PC-3 (cell line): ENCODE measurements at regions of chr5 and their contacts with region 1.

Region 1: DNA sequence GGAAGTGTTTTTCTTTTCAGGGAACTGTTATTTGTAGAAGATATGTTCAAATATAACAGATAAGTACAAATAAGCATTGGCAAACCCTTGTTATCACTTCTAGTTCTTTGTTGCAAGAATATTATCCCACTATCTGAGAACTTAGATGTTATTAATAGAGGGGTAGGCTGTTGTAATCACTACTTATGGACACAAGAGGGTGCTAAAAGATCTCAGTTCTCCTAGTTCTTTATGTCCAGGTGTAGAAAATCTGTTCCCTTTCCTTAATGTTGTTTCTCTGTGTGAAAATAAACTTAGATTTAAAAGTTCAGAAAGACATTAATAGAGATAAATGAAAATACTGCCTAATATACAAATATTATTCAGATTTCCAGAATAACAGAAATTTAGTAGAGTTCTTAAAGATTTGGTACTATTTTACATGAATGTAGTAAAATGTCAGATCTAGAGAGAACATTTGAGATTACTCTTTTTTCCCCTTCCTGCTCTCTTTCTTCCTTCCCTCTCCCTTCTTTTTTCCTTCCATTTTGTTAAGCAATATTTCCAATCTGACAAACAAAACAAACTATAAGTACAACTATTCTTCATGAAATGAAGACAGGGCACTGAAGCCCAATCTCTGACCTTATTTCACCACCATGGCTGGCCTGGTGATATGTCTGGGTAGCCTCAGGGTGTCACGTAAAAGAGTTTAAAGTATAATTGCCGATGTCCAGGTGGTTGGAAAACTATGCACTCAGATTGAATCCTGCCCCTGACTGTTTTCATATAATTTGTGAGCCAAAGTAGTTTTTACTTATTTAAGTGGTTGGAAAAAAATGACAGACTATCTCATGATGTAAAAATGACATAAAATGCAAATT is 43.6 kb upstream of the C5orf46 start:
- DNase-seq: peak; percentile 85
- ATAC-seq: peak; percentile 93
- H3K4me3 ChIP-seq: no peak overlapping the region
- H3K27ac ChIP-seq: no peak overlapping the region
- H3K4me1 ChIP-seq: no peaks in the 10 kb centered on the region
- H3K27me3 ChIP-seq: no peaks in the 10 kb centered on the region
- CTCF ChIP-seq: peak; percentile 96

Region 2: GRCh38 chr5:147522435-147522834 is 427.5 kb before region 1 on chr5:
- CTCF ChIA-PET with region 1: no interaction called
- POLR2A ChIA-PET with region 1: no interaction called
- intact Hi-C with region 1: no loop called
- DNase-seq: peak; percentile 53
- ATAC-seq: peak; percentile 66
- H3K4me3 ChIP-seq: no peak overlapping the region
- H3K27ac ChIP-seq: peak overlapping the region; percentile 18; the same call in 1 of the 2 replicates
- H3K4me1 ChIP-seq: peaks cover 4% of the 10 kb centered on the region; the same call in 1 of the 2 replicates
- H3K27me3 ChIP-seq: no peaks in the 10 kb centered on the region
- CTCF ChIP-seq: no peak

Region 3: DNA sequence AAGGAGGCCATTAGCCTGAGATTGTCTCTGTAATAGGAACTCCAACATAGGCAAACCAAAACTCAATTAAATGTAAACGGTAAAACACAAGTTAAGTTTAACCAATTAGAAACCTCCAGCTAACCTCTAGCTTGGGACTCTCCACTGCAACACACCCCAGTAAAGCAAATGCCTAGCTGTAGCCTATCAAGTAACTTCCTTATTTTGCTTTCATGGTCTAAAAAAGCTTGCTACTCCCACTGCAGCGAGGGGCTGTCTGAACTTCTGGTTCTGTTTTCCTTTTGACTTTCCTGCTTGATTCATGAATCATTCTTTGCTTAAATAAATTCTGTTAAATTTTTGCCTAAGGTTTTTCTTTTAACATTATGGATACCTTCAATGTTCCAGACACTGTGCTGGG is 19.2 kb before region 1 on chr5:
- CTCF ChIA-PET with region 1: no interaction called
- POLR2A ChIA-PET with region 1: no interaction called
- intact Hi-C with region 1: no loop called
- DNase-seq: no peak
- ATAC-seq: no peak
- H3K4me3 ChIP-seq: no peak overlapping the region
- H3K27ac ChIP-seq: no peak overlapping the region
- H3K4me1 ChIP-seq: peaks cover 13% of the 10 kb centered on the region
- H3K27me3 ChIP-seq: no peaks in the 10 kb centered on the region
- CTCF ChIP-seq: no peak

Region 4: DNA sequence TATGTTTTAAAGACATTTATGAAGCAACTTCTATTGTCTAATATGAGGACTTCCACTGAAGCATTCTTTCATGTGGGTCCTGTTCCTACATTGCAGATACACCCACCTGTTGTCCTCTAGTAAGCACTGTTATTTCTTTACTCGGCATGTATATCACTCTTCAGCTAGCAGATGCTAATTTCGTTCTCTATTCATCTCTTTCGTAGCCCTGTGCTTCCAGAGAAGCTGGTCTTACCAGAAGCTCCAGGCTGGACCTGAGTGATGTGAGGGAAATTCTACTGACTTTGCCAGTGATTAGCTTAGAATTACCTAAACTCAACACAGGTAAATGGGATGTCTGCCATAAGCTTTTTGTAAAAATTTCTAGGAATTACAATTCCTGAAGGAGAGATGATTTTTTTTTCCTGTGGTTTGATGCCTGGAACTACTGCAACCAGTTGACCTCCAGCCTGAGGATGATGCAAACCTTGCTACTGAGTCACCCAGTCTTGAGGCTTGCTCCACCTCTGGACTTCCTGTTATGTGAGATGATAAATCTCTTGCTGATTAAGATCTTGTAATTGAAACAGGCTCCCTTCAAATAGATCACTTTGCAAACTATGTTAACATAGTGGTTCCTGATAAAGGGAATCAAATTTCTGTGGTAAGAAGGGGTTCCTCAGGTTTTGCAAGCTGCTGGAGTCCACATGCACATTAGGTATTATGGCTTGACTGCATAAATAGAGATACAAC is 61.6 kb after region 1 on chr5:
- CTCF ChIA-PET with region 1: no interaction called
- POLR2A ChIA-PET with region 1: no interaction called
- intact Hi-C with region 1: loop called (anchors 2 kb)
- DNase-seq: peak; percentile 98
- ATAC-seq: peak; percentile 94
- H3K4me3 ChIP-seq: peak overlapping the region; percentile 14; the same call in 1 of the 2 replicates
- H3K27ac ChIP-seq: peak overlapping the region; percentile 73
- H3K4me1 ChIP-seq: peaks cover 41% of the 10 kb centered on the region
- H3K27me3 ChIP-seq: no peaks in the 10 kb centered on the region
- CTCF ChIP-seq: no peak

Region 5: GRCh38 chr5:148125641-148126040 is 175.7 kb after region 1 on chr5:
- CTCF ChIA-PET with region 1: no interaction called
- POLR2A ChIA-PET with region 1: no interaction called
- intact Hi-C with region 1: loop called (anchors 1 kb)
- DNase-seq: peak; percentile 60
- ATAC-seq: peak; percentile 81
- H3K4me3 ChIP-seq: no peak overlapping the region
- H3K27ac ChIP-seq: no peak overlapping the region
- H3K4me1 ChIP-seq: peaks cover 2% of the 10 kb centered on the region; the same call in 1 of the 2 replicates
- H3K27me3 ChIP-seq: no peaks in the 10 kb centered on the region
- CTCF ChIP-seq: peak; percentile 66

Region 6: GRCh38 chr5:148306446-148306845 is 356.5 kb after region 1 on chr5:
- CTCF ChIA-PET with region 1: no interaction called
- POLR2A ChIA-PET with region 1: no interaction called
- intact Hi-C with region 1: loop called (anchors 1 kb)
- DNase-seq: peak; percentile 42
- ATAC-seq: peak; percentile 90
- H3K4me3 ChIP-seq: no peak overlapping the region
- H3K27ac ChIP-seq: no peak overlapping the region
- H3K4me1 ChIP-seq: no peaks in the 10 kb centered on the region; the same call in 1 of the 2 replicates
- H3K27me3 ChIP-seq: no peaks in the 10 kb centered on the region
- CTCF ChIP-seq: peak; percentile 55

Region 7: GRCh38 chr5:148374692-148375360 is 424.9 kb after region 1 on chr5:
- CTCF ChIA-PET with region 1: no interaction called
- POLR2A ChIA-PET with region 1: no interaction called
- intact Hi-C with region 1: loop called (anchors 5 kb)
- DNase-seq: peak; percentile 85
- ATAC-seq: peak; percentile 73
- H3K4me3 ChIP-seq: no peak overlapping the region
- H3K27ac ChIP-seq: no peak overlapping the region
- H3K4me1 ChIP-seq: peaks cover 14% of the 10 kb centered on the region
- H3K27me3 ChIP-seq: no peaks in the 10 kb centered on the region
- CTCF ChIP-seq: peak; percentile 98